Sciatic nerve (tissue), 2 donors: ENCODE measurements at regions of chr1 and their contacts with region 1.

Region 1: DNA sequence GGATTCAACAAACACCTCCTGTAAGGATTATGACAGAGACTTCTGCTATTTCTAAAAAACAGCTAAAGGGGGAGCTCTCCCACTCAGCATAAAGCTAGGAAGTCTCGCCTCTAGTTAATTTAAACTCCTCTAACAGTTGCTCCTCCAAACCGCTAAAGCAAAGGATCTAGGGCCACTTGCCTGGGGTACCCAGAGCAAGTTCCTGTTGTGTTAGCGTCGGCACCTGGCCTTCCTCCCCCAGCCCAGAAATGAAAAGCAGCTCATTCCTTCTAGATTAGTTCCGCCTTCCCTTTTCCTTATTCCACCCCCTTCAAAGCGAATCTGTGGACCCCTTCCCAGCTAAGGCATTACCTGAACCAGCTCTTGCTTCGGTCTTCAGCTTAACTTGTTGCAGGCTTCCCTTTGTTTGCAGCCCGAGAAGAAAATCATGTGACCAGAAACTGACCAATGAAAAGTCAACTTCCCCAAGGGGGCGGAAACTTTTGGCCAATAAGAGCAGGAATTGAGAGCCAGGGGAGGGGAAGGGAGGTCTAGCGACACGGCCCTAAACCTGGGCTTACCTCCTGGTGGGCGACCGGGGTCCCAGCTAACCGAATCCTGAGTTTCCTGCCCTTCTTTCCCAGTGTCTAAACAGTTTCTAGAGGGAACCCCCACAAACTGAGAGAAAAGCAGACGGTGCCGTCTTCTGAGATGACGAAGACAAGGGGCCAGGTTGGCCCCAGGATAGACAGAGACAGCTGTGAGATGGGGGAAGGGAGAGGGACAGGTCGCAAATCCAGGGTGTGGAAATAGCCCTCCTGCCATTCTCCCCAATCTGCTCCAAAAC is at the start of gene PBXIP1:
- DNase-seq: peak; percentile 84
- ATAC-seq: peak; percentile 88
- total RNA-seq, gene PBXIP1: 71.1 TPM

Region 2: GRCh38 chr1:154906621-154907081 is 49.3 kb before region 1 on chr1:
- intact Hi-C with region 1: no loop called
- DNase-seq: peak; percentile 30
- ATAC-seq: peak; percentile 34

Region 3: GRCh38 chr1:155050560-155051341 is 94.8 kb after region 1 on chr1 and contains the start of gene ADAM15:
- intact Hi-C with region 1: loop called (anchors 10 kb)
- DNase-seq: peak; percentile 93
- ATAC-seq: peak; percentile 81
- total RNA-seq, gene ADAM15: 147 TPM